Activated CD4-positive, alpha-beta T cell treated with anti-CD3 and anti-CD28 coated beads for 36 hours (primary cell): ENCODE measurements at regions of chr19 and their contacts with region 1.

Region 1: DNA sequence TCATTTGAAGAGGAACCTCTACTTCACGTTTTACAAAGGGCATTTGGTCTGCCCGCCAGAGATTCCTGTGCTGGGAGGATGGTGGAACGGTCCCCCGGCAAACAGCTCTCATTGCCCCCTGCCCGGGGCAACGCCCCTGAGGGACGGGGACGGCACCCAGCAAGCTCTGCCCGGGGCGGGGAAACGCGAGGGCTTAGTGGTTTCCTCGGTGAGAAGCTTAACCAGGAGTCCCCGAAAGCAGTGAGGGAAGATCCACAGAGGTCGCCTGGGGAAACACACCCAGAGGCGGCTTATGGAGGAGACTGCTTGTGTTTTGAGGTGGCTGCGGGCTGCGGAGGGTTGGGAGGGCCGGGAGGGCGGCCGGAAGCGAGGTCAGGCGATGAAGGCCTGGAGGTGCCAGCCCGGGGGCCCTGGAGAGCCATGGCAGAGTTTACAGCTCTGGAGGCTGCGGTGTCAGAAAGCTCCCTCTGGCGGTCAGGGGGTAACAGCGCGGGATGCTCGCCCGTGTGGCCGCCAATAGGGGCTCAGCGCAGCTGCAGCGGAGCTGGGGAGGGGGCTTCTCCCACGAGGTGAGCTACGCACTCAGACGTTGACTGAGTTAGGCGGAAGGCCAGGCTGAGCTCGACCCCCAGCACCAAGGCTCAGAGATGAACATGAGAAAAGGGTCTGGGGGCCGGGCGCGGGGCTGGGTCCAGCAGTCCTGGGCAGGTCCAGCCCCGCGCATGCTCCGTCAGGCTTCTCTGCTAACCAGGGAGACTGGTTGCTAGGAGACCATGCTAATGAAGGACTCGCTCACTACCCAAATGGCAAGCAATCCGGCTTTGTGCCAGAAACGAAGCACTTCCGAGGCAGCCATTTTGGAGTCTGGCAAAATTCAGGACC is 652 bp upstream of the TPGS1 start:
- DNase-seq: peak; percentile 97
- ATAC-seq: peak; percentile 72
- H3K4me3 Mint-ChIP-seq: peak overlapping the region; percentile 95
- H3K27ac Mint-ChIP-seq: peak overlapping the region; percentile 100
- H3K4me1 Mint-ChIP-seq: peaks cover 41% of the 10 kb centered on the region
- H3K27me3 Mint-ChIP-seq: no peaks in the 10 kb centered on the region

Region 2: DNA sequence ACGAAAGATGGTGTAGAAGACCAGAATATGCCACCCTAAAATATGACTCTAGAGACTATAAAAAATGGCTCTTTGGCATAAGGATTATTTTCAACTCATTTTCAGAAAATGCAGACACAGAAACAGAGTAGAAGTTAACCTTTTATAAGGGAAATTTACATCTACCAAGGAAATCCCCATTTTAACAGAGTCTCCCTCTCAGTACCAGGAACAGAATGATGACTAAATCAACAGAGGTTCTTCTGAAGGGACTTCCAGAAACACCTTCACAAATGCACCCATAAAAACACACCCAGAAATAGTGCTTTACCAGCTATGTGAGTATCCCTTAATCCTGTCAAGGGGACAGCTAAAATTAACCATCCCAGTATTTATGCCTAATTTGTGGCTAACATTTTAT is 244.5 kb before region 1 on chr19:
- CTCF ChIA-PET with region 1: interaction called, 3 read pairs
- POLR2A ChIA-PET with region 1: no interaction called
- intact Hi-C with region 1: loop called in 1 of 2 experiments (anchors 1 kb)
- DNase-seq: no peak
- ATAC-seq: peak; percentile 85
- H3K4me3 Mint-ChIP-seq: no peak overlapping the region
- H3K27ac Mint-ChIP-seq: peak overlapping the region; percentile 75
- H3K4me1 Mint-ChIP-seq: peaks cover 22% of the 10 kb centered on the region
- H3K27me3 Mint-ChIP-seq: peaks cover 36% of the 10 kb centered on the region

Region 3: GRCh38 chr19:383922-384798 is 122.5 kb before region 1 on chr19:
- CTCF ChIA-PET with region 1: interaction called, 6 read pairs
- POLR2A ChIA-PET with region 1: interaction called, 3 read pairs
- intact Hi-C with region 1: loop called in 1 of 2 experiments (anchors 1 kb)
- DNase-seq: no peak
- ATAC-seq: no peak
- H3K4me3 Mint-ChIP-seq: no peak overlapping the region
- H3K27ac Mint-ChIP-seq: peak overlapping the region; percentile 77
- H3K4me1 Mint-ChIP-seq: peaks cover 25% of the 10 kb centered on the region
- H3K27me3 Mint-ChIP-seq: peaks cover 33% of the 10 kb centered on the region

Region 4: DNA sequence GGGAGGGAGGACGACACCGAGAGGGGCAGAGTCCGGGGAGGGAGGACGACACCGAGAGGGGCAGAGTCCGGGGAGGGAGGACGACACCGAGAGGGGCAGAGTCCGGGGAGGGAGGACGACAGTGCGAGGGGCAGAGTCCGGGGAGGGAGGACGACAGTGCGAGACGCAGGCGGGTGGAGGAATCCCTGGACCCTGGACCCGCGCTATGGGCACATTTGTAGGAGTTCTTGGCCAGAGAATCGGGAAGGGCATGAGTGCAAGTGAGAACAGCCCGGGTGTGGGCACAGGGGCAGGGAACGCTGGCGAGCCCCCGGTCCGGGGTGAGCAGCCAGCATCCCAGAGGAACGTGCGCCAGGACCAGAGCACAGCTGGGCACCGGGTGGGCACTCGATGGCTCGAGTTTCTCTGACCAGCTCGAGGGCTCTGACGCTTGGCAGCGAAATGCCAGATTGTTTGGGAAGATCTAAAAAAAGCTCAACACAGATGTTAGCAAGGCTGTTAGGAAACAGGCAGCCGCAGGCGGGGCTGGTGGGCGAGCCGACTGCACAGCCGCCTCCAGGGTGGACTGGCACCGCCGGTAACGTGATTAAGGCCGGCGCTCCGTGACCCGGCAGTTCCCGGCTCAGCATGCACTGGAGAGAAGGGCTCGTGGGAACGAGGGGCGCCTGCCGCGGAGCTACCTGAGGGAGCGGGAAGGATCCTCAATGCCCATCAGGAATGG is 79.8 kb before region 1 on chr19:
- CTCF ChIA-PET with region 1: no interaction called
- POLR2A ChIA-PET with region 1: no interaction called
- intact Hi-C with region 1: no loop called
- DNase-seq: no peak
- ATAC-seq: no peak
- H3K4me3 Mint-ChIP-seq: no peak overlapping the region
- H3K27ac Mint-ChIP-seq: no peak overlapping the region
- H3K4me1 Mint-ChIP-seq: no peaks in the 10 kb centered on the region
- H3K27me3 Mint-ChIP-seq: peaks cover 2% of the 10 kb centered on the region

Region 5: DNA sequence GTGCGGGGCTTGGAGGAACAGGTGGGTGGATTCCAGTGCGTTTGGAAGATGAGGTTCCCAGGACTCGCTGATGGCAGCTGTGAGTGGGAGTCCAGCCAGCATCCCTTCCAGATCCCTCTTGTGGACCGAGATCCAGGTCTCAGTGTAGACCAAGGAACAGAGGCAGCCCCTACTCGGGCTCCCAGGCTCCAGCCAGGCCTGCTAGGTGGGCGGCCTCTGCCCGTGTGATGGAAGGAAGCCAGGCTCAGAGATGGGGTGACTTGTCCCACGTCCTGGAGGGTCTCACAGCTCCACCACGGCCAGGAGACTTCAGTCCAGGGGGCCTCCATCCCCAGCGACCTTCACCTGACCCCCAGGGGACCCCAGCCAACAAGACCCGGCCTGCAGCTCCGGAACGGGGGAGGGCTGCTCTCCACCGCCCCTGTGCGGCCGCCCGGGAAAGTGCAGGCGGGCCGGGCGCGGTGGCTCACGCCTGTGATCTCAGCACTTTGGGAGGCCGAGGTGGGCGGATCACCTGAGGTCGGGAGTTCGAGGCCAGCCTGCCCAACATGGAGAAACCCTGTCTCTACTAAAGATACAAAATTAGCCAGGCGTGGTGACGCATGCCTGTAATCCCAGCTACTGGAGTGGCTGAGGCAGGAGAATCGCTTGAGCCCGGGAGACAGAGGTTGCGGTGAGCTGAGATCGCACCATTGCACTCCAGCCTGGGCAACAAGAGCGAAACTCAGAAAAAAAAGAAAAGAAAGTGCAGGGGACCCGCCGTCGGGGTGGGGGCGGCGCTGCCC is 11.1 kb before region 1 on chr19:
- CTCF ChIA-PET with region 1: interaction called, 18 read pairs
- POLR2A ChIA-PET with region 1: interaction called, 4 read pairs
- intact Hi-C with region 1: no loop called
- DNase-seq: peak; percentile 77
- ATAC-seq: peak; percentile 36
- H3K4me3 Mint-ChIP-seq: no peak overlapping the region
- H3K27ac Mint-ChIP-seq: no peak overlapping the region
- H3K4me1 Mint-ChIP-seq: peaks cover 2% of the 10 kb centered on the region
- H3K27me3 Mint-ChIP-seq: peaks cover 13% of the 10 kb centered on the region

Region 6: GRCh38 chr19:531009-531752 is 24.5 kb after region 1 on chr19:
- CTCF ChIA-PET with region 1: interaction called, 30 read pairs
- POLR2A ChIA-PET with region 1: interaction called, 7 read pairs
- intact Hi-C with region 1: loop called (anchors 1 kb)
- DNase-seq: peak; percentile 93
- ATAC-seq: peak; percentile 78
- H3K4me3 Mint-ChIP-seq: peak overlapping the region; percentile 77
- H3K27ac Mint-ChIP-seq: peak overlapping the region; percentile 84
- H3K4me1 Mint-ChIP-seq: peaks cover 24% of the 10 kb centered on the region
- H3K27me3 Mint-ChIP-seq: peaks cover 1% of the 10 kb centered on the region

Region 7: DNA sequence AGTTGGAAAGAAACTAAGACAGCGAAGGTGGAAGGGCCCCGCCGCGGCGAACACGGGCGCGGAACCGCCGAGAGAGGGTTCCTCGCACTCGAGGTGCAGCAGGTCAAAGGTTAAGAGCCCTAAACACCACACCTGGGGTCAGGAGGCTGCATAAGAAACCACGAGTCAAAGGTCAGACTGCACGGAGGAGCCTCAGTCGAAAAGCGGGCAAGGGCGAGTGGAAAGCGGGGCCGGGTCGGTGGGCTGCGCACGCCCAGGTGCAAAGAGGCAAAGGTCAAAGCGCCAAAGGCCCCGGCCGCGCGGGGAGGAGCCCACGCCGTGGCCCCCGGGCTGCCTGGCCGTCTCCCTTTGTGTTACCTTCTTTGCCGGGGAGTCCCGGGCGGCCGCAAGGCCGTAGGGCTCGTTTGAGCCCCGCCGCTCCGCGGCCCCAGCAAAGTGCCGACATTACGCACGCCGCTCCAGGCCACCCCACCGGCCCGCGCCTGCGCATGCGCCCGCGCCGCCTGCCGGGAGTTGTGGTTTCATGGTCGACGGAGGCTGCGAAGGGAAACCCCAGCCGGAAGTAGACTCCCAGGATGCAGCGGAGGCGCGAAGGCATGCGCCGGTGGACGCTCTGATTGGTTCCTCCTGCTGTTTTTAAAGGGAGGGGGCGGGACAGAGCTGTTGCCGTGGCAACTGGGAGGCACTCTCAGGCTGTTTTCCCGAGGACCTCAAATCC is 126.6 kb after region 1 on chr19 and contains the start of gene POLRMT:
- CTCF ChIA-PET with region 1: no interaction called
- POLR2A ChIA-PET with region 1: no interaction called
- intact Hi-C with region 1: loop called in 1 of 2 experiments (anchors 1 kb)
- DNase-seq: peak; percentile 98
- ATAC-seq: peak; percentile 98
- H3K4me3 Mint-ChIP-seq: peak within 1 kb of the TSS; percentile 97
- H3K27ac Mint-ChIP-seq: peak within 1 kb of the TSS; percentile 91
- H3K4me1 Mint-ChIP-seq: peaks cover 29% of the 10 kb centered on the region
- H3K27me3 Mint-ChIP-seq: no peaks in the 10 kb centered on the region
- total RNA-seq, gene POLRMT: 69.0 to 77.4 TPM